Head of caudate nucleus (tissue), 42 donors: ENCODE measurements at regions of chr6 and their contacts with region 1.

Region 1: GRCh38 chr6:22145823-22146677 is 150.8 kb downstream of the PRL start:
- DNase-seq: peak; percentile 65 to 94 (median 88)

Region 2: DNA sequence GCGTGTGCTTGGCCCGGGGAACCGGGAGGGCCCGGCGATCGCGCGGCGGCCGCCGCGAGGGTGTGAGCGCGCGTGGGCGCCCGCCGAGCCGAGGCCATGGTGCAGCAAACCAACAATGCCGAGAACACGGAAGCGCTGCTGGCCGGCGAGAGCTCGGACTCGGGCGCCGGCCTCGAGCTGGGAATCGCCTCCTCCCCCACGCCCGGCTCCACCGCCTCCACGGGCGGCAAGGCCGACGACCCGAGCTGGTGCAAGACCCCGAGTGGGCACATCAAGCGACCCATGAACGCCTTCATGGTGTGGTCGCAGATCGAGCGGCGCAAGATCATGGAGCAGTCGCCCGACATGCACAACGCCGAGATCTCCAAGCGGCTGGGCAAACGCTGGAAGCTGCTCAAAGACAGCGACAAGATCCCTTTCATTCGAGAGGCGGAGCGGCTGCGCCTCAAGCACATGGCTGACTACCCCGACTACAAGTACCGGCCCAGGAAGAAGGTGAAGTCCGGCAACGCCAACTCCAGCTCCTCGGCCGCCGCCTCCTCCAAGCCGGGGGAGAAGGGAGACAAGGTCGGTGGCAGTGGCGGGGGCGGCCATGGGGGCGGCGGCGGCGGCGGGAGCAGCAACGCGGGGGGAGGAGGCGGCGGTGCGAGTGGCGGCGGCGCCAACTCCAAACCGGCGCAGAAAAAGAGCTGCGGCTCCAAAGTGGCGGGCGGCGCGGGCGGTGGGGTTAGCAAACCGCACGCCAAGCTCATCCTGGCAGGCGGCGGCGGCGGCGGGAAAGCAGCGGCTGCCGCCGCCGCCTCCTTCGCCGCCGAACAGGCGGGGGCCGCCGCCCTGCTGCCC is 551.4 kb before region 1 on chr6:
- intact Hi-C with region 1: loop called (anchors 5 kb)
- DNase-seq: peak; percentile 32 to 84 (median 68)